ENCODE measurements at regions of chr5 and their contacts with region 1.

Region 1: DNA sequence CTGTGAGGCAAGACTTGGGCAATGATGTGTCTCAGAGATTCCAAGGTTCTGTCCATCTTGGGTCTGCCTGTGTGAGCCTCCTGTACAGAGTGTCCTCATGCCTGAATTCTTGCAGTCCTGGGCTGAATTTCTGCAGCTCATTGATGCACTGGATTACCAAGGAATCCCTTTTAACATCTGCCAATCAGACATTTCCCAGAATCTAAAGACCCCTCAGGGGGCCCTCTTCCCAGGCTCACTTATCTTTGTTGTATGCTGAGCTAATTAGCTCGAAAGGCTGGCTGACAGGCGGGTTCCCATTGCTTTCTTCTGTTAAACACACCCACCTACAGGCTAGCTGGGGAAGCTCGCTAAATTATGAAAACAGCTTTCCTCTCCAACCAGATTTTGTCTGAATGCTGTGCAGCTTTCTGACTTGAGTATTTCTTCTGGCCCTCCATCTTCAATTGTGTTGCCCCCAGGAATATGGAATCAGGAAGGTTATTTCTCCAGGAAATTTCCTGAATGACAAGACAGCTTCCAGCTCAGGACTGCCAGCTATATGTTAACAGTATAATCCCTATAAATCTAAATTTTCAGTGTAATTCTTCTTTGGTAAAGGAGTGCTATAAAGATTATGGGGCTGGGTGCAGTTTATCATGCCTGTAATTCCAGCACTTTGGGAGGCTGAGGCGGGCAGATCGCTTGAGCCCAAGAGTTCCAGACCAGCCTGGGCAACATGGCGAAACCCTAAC is at the start of gene LIX1:
- H3K4me3 Mint-ChIP-seq: no peak within 1 kb of the TSS
- H3K27ac Mint-ChIP-seq: no peak within 1 kb of the TSS
- H3K4me1 Mint-ChIP-seq: no peaks in the 10 kb centered on the region
- H3K27me3 Mint-ChIP-seq: no peaks in the 10 kb centered on the region

Region 2: DNA sequence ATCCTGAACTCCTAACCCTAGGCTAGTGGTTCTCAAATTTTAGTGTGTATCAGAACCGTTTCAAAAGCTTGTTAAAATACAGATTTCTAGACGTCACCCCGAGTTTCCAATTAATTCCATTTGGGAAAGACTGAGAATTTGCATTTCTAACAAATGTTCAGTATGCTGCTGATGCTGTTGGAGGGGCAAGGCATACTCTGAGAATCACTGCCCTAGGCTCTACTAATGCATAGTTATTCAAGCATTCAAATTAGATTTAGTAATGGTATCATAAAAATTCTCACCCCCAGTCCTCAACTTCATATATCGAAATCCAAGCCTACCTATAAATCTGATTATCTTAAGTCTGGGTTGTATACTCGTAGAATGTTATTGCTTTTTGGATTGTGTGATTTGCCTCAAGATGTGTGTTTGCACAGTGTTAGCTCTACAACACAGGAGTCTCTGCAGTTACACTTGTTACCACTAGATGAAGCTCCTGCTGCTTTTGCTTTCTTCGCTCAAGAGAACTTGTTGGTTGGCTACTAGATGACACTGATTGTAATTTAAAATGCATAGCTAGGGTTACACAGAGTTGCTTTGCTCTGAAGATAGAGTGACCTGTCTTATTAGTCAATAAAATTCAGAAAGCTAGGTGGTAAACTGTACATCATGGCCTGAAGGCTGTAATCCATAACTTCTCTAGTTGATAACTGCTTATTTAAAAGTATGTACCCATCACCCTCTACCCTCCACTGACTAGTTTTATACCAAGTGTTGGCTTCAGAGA is 273.9 kb before region 1 on chr5:
- intact Hi-C with region 1: loop called (anchors 5 kb)
- H3K4me3 Mint-ChIP-seq: no peak overlapping the region
- H3K27ac Mint-ChIP-seq: no peak overlapping the region
- H3K4me1 Mint-ChIP-seq: no peaks in the 10 kb centered on the region
- H3K27me3 Mint-ChIP-seq: peaks cover 1% of the 10 kb centered on the region

Region 3: DNA sequence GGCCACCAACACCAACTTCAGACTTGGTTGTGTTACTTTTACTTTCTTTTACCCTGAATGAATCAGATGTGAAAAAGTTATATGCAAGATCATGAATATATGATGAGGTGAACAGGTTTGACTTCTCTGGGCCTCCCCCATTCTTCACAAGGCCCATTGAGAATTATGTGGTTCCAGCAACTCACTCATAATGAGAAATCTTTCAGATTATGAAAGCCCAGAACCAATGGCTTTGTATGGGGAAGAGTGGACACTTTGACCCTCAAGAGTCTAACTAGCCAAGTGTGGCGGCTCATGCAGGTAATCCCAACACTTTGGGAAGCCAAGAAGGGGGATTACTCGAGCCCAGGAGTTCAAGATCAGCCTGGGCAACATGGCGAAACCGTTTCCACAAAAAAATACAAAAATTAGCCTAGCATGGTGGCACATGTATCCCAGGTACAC is 222.9 kb before region 1 on chr5:
- intact Hi-C with region 1: no loop called
- H3K4me3 Mint-ChIP-seq: no peak overlapping the region
- H3K27ac Mint-ChIP-seq: no peak overlapping the region
- H3K4me1 Mint-ChIP-seq: peaks cover 16% of the 10 kb centered on the region
- H3K27me3 Mint-ChIP-seq: no peaks in the 10 kb centered on the region

Region 4: GRCh38 chr5:96997265-96997859 is 145.3 kb before region 1 on chr5:
- intact Hi-C with region 1: loop called (anchors 5 kb)
- H3K4me3 Mint-ChIP-seq: no peak overlapping the region
- H3K27ac Mint-ChIP-seq: no peak overlapping the region
- H3K4me1 Mint-ChIP-seq: no peaks in the 10 kb centered on the region
- H3K27me3 Mint-ChIP-seq: no peaks in the 10 kb centered on the region

Region 5: DNA sequence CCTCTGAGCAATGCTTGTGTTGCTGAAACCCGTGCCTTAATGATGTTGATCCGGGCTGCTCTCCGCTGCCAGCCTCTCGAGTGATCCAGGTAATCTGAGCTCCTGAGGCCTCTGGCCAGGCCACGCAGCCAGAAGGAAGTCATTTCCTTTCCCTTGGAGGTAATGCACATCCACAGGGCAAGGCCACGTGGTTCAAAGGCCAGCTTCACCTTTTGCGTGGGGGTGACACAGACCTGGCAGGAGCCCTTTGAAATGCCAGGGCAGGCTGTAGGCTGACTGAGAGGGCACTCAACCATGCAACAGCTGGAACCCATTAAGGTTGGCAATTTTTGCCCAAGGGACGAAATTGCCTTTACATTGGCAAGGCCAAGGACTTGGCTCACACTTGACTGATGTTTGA is 80.6 kb before region 1 on chr5:
- intact Hi-C with region 1: no loop called
- H3K4me3 Mint-ChIP-seq: no peak overlapping the region
- H3K27ac Mint-ChIP-seq: no peak overlapping the region
- H3K4me1 Mint-ChIP-seq: no peaks in the 10 kb centered on the region
- H3K27me3 Mint-ChIP-seq: no peaks in the 10 kb centered on the region